Left cardiac atrium (tissue), 4 donors: ENCODE measurements at regions of chr17 and their contacts with region 1.

Region 1: GRCh38 chr17:59427425-59427921 is 96.0 kb downstream of the YPEL2 start:
- DNase-seq: no peak
- ATAC-seq: peak; percentile 59 to 64

Region 2: DNA sequence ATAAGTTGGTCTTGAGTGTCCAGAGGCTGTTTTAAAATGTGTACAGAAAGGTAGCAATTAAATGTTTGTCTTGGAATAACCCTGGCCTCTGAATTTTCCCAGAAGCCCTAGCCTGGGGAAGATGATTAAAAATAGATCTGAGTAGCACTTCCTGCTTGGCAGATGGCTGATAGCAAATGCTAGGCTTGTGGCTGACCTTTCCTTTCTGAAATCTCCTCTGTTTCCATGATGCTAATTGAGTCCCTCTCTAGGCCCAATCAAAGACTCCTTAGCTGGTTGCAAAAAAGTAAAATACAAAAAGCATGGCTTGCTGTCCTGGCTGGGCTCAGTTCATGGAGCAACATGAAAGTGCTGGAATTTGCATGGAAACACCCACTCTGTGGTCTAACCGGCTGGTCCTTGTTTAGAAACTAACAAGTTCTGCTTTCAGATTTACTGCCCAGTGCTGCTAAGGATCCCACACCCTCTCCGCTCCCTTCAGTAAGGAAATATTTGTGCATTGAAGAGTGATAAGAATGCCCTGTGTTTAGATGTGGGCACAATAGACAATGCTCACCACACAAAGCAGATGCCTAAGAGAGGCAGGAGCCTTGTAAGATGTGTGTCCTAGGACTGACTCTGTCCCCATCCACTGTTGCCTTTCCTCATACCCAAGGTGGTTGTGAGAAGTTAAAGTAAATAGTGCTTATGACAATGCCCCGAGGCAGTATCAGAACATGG is 55.2 kb before region 1 on chr17:
- intact Hi-C with region 1: loop called in 1 of 2 experiments (anchors 5 kb)
- DNase-seq: peak; percentile 51
- ATAC-seq: peak; percentile 66 to 81

Region 3: GRCh38 chr17:59387351-59388068 is 40.0 kb before region 1 on chr17:
- intact Hi-C with region 1: loop called in 1 of 2 experiments (anchors 5 kb)
- DNase-seq: no peak
- ATAC-seq: peak; percentile 22 to 67

Region 4: DNA sequence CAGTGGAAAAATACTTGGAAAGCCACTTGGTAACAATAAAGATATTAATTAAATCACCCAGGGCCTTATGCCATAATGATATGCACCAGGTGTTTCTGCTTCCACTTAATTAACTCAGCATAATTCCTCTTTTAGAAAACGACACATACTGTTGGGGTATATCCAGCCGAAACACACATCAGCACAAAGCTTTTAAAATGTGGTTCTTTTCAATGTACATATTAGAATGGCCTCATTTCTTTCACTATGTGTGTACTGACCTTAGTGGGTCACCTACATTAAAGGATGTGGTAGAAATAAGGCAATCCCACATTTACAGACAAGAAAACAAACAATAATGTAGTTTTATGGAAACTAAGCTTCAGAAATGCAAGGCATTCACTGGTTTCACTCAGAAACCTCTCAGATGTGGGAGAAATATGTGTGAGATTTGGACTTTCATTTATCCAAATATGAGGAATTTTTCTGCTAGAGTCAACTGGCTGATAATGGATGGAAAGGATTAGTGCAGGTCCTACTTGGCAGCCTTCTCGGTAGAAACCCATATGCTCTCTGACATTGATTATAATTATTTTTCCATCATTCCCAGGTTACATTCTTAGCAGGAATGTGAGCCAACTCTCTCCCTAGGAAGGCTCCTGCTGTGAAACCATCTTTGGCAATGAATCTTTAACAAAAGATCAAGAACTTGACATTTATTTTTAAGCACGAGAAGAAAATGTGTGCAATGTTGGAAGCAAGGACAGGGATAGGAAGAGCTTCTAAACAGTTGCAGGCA is 71.2 kb after region 1 on chr17:
- intact Hi-C with region 1: no loop called
- DNase-seq: no peak
- ATAC-seq: no peak